BJ (cell line): ENCODE measurements at regions of chrX and their contacts with region 1.

Region 1: GRCh38 chrX:49915361-49916222 is 6.8 kb upstream of the CLCN5 start:
- DNase-seq: no peak
- H3K4me3 ChIP-seq: no peak overlapping the region
- H3K27me3 ChIP-seq: no peaks in the 10 kb centered on the region; the same call in 1 of the 2 replicates
- CTCF ChIP-seq: peak; percentile 79

Region 2: DNA sequence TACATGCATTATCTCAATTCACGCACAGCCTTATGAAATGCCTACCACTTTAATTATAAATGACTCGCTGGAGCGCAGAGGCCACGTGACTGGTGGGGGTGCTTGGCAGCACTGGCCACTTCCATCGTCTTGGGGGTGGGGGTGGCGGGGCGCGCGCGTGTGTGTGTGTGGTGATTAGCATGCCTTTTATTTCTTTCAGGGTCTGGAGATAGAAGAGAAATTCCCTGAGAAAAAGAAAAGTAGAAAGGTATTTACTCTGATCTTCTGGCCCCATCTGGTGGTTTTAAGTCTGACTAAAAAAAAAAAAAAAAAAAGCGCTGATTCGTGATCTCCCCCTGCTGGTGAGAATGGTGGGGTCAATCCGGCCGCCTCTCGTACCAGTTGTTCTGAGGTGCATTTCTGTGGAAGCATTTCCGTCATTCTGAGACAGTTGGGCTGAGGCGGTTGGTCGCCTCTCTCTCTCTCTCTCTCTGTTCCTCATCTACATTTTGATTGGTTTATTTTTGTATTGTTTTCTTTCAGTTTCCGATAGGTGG is 288.8 kb after region 1 on chrX and contains the start of gene CCNB3:
- CTCF ChIA-PET with region 1: interaction called, 20 read pairs
- POLR2A ChIA-PET with region 1: no interaction called
- DNase-seq: peak; percentile 8
- H3K4me3 ChIP-seq: peak within 1 kb of the TSS; percentile 30
- H3K27me3 ChIP-seq: no peaks in the 10 kb centered on the region
- CTCF ChIP-seq: peak; percentile 67
- polyA plus RNA-seq, gene CCNB3: 0.11 and 0.59 TPM in 2 replicates